ENCODE measurements at regions of chr13 and their contacts with region 1.

Region 1: DNA sequence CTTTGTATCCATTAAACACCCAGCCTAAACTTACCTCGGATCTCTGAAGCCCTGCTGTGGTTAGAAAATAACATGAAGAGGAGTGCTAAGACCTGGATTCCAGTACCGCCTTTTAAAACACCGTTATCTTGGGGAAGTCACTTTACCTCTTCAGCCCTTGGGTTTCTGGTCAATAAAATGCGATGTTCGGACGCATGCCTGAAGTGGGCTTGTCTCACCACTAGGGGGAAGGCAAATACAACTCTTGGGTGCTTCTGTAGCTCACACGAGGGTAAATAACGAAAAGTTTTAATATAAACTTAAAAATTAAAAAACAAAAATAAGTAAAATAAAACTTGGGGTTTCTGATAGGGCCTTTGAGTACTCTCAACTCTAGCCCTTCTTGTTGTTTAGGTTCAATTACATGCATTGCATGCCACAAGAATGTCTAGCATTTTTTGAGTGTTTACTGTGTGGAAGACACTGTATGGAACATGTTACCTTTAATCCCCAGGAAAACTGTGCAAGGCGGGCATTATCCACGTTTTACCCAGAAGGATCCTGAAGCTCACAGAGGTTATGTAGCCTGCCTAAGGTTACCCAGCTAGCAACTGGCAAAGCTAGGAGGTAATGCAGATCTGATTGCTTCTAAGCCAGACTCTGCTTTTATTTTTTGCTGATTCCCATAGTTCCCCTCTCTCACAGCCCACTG is 240.4 kb downstream of the LMO7 start:
- ATAC-seq: peak; percentile 68 to 86 (median 76)
- H3K4me3 ChIP-seq: no peak overlapping the region
- H3K27ac ChIP-seq: no peak overlapping the region
- H3K4me1 ChIP-seq: no peaks in the 10 kb centered on the region

Region 2: DNA sequence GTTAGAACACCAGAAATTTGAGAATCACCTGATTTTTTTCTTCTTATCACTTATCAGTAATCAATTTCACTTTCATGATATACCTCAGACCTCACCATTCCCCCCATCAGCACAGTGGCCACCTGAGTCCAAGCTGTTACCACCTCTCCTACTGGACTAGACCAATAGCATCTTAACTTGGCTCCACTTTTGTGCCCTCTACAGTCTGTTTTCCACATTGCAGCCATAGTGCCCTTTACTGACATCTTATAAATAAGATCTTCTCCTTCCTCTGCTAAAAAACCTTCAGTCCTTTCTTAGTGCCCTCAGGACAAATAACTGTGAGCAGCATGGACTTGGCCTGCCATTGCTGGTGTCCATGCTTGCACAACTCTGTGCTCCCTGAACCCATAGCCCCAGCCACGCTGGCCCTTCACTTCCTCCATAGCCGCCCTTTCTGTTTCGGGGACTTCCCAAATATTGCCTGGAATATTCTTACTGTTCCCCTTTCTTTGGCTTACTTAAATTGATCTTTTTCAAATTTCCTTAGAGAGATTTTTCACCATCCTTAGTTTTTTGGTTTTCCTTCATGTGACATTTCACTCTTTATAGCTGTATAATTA is 140.4 kb after region 1 on chr13:
- in situ Hi-C with region 1: loop called in 1 of 9 experiments (anchors 10 kb)
- ATAC-seq: peak in 3 of 8 experiments; percentile 47 to 78 (median 68)
- H3K4me3 ChIP-seq: no peak overlapping the region
- H3K27ac ChIP-seq: no peak overlapping the region
- H3K4me1 ChIP-seq: no peaks in the 10 kb centered on the region

Region 3: DNA sequence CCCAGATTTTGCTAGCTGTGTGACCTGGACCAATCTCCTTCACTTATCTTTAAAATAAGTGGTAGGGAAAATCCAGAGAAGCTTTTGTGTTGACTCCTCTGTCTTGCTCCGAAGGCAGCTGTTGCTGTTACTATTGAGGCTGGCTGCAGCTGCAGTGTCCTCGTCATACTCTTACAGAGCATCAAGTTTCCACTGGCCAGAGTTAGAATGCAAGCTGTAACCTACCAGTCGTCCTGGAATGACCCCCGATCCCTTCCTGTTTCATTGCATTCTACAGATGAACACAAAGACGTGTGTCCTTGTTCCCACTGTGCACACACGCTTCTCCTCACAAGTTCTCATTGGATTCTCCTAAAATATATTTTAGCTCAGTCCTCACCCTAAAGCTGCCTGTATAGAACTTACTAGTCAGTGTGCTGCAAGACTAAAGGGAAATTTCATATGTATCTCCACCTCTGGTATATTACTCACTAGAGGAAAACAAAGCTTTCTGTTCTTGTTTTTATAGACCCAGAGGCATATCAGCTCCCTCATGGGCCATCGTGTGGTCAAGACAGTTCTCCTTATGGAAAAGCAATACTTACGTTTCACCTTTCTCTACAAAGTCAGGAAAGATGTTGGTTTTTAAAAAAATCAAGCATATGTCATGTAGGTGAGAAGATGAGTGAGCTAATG is 349.4 kb after region 1 on chr13:
- in situ Hi-C with region 1: loop called in 1 of 9 experiments (anchors 25 kb)
- ATAC-seq: peak in 1 of 8 experiments; percentile 27
- H3K4me3 ChIP-seq: no peak overlapping the region
- H3K27ac ChIP-seq: no peak overlapping the region
- H3K4me1 ChIP-seq: no peaks in the 10 kb centered on the region

Region 4: GRCh38 chr13:76473552-76474134 is 597.1 kb after region 1 on chr13:
- in situ Hi-C with region 1: loop called in 8 of 9 experiments (anchors 5 to 25 kb)
- ATAC-seq: peak; percentile 80 to 100 (median 94)
- H3K4me3 ChIP-seq: no peak overlapping the region
- H3K27ac ChIP-seq: no peak overlapping the region
- H3K4me1 ChIP-seq: no peaks in the 10 kb centered on the region

Region 5: DNA sequence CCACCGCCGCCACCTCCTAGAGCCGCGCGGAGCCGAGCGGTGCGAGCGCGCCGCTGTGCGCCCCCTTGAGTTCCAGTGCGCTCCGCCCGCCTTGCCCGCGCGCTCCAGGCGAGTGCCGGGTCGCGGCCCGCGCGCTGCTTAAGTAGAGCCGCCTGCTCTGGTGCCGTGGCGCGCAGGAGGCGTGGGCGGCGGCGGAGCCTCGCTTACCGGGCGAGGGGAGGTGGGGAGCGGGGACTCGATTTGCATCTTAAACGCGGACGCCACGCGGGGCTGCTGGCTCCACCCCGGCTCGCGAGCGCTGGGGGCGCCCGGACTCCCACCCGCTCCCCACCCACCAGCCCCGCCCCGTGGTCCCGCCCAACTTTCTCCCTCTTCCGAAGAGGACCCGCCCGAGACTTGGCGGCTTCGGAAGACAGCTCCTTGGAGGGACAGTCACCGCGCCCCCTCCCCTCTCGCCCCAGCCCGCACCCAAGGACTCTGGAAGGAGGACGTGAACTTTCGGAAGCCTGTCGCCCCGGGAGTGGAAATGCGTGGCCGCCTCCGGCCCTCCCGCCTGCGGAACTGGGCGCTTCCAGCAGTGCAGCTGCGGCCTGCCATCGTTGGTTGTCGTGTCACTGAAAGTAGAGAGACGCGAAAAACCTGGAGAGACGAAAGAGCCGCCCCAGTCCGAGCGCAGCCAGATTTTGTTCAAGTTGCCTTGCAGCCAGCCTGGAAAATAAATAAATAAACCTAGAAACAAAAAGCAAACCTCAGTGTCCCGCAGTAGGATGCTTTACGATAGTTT is 1010.0 kb after region 1 on chr13 and contains the start of gene KCTD12:
- in situ Hi-C with region 1: loop called in 1 of 9 experiments (anchors 25 kb)
- ATAC-seq: peak; percentile 51 to 88 (median 86)
- H3K4me3 ChIP-seq: peak within 1 kb of the TSS; percentile 52 to 99 (median 66)
- H3K27ac ChIP-seq: peak within 1 kb of the TSS in 1 of 2 donors; percentile 22
- H3K4me1 ChIP-seq: no peaks in the 10 kb centered on the region
- total RNA-seq, gene KCTD12: 3.8 to 42.7 (median 12.8) TPM

Region 6: DNA sequence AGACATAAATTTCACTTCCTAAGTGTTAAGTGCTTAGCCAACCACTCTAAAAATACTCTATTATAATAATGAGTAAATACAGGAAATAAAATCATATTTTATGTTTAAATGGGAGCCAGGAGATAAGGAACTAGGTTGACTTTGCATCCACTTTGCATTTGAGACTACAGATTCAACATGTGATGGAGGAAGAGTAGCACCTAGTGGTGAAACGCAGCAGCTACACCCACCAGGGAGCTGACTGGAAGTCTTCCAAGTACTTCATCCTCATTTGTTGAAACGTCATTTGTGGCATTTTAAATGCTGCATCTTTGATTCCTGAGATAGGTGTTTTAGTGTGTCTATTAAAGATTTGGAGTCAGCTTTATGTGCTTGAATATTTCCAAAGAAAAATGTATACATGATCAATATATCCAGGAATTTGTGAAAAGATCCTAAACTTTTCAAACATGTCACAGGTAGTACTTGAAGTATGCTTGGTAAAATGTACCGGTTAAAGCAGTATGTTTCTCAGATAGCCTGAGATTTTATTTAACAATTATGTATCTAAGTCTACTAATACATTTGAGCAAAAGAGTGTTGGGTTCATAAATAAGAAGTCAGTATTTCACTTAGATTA is 1027.1 kb after region 1 on chr13:
- in situ Hi-C with region 1: loop called in 4 of 9 experiments (anchors 10 to 25 kb)
- ATAC-seq: peak in 6 of 8 experiments; percentile 55 to 82 (median 60)
- H3K4me3 ChIP-seq: no peak overlapping the region
- H3K27ac ChIP-seq: no peak overlapping the region
- H3K4me1 ChIP-seq: no peaks in the 10 kb centered on the region